Ovary (tissue), 10 donors: ENCODE measurements at regions of chr1 and their contacts with region 1.

Region 1: GRCh38 chr1:116485071-116485735 is 85.6 kb downstream of the CD58 start:
- DNase-seq: peak; percentile 81 to 94 (median 90)
- H3K4me3 ChIP-seq: no peak overlapping the region
- H3K27ac ChIP-seq: no peak overlapping the region
- H3K4me1 ChIP-seq: peaks cover 8% of the 10 kb centered on the region
- H3K27me3 ChIP-seq: no peaks in the 10 kb centered on the region
- CTCF ChIP-seq: peak; percentile 67 to 89 (median 87)
- EP300 ChIP-seq: no peak
- POLR2A ChIP-seq: no peak

Region 2: DNA sequence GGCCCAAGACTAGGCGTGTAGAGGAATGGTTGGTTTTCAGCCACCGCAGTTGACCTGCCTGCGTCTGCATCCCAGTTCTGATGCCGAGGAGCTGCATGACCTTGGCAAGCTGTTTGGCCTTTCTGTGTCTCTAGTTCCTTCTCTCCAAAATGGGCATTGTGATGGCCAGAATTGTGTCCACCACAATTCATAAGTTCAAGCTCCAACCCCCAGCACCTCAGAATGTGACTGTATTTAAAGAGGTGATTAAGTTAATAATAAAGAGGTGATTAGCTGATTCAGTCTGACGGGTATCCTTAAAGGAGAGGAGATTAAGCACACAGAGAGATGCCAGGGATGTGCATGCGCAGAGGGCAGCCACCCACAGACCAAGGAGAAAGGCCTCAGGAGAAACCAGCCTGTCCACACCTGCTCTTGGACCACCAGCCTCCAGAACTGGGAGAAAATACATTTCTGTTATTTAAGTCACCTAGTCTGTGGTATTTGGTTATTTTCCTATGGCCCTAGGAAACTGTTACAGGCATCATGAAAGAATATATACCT is 345.5 kb before region 1 on chr1:
- intact Hi-C with region 1: loop called in 1 of 4 experiments (anchors 5 kb)
- DNase-seq: no peak
- H3K4me3 ChIP-seq: no peak overlapping the region
- H3K27ac ChIP-seq: no peak overlapping the region
- H3K4me1 ChIP-seq: no peaks in the 10 kb centered on the region
- H3K27me3 ChIP-seq: no peaks in the 10 kb centered on the region
- CTCF ChIP-seq: no peak
- EP300 ChIP-seq: no peak
- POLR2A ChIP-seq: no peak

Region 3: GRCh38 chr1:116151739-116152576 is 333.2 kb before region 1 on chr1:
- intact Hi-C with region 1: loop called in 2 of 4 experiments (anchors 5 kb)
- DNase-seq: peak; percentile 61 to 84 (median 69)
- H3K4me3 ChIP-seq: peak overlapping the region; percentile 31
- H3K27ac ChIP-seq: peak overlapping the region in 1 of 2 donors; percentile 45
- H3K4me1 ChIP-seq: no peaks in the 10 kb centered on the region
- H3K27me3 ChIP-seq: no peaks in the 10 kb centered on the region
- CTCF ChIP-seq: peak; percentile 68 to 87 (median 80)
- EP300 ChIP-seq: no peak
- POLR2A ChIP-seq: no peak

Region 4: GRCh38 chr1:116352349-116352813 is 132.8 kb before region 1 on chr1:
- intact Hi-C with region 1: loop called in 1 of 4 experiments (anchors 10 kb)
- DNase-seq: no peak
- H3K4me3 ChIP-seq: no peak overlapping the region
- H3K27ac ChIP-seq: no peak overlapping the region
- H3K4me1 ChIP-seq: no peaks in the 10 kb centered on the region
- H3K27me3 ChIP-seq: no peaks in the 10 kb centered on the region
- CTCF ChIP-seq: no peak
- EP300 ChIP-seq: no peak
- POLR2A ChIP-seq: no peak

Region 5: DNA sequence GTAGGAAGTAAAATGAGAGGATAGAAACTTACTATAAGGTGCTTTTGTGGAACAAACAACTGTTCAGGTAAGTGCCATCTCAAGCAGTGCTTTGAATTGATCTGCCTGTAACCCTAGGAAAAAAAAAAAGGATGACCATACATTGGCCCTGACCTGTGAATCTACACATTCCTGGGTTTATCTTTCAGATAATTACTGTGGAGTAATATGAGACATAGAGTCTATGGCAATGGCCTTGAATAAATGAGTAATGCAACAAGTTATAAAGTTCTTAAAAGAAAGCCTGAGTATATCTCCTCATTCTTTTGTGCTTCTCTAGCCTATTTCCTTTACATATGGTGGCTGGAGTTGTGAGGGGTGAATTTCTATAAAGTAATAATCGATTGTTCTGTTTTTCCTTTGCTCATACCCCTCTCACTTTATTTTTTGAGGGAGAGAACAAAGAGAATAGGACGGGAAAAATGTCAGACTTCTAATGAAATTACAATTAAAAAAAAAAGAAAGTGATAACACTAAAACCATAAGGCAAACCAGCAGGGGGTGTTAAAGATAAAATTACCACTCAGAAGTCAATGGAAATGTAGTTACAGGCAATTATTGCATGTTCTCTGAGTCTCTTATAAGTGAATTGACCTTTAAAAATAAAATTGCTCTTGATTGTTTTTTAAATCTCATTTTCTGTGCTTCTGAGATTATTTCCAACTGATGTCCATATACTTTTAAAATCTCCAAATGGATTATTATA is 124.6 kb before region 1 on chr1:
- intact Hi-C with region 1: loop called in 3 of 4 experiments (anchors 2 to 10 kb)
- DNase-seq: no peak
- H3K4me3 ChIP-seq: no peak overlapping the region
- H3K27ac ChIP-seq: no peak overlapping the region
- H3K4me1 ChIP-seq: peaks cover 1% of the 10 kb centered on the region
- H3K27me3 ChIP-seq: no peaks in the 10 kb centered on the region
- CTCF ChIP-seq: peak in 1 of 3 donors; percentile 18
- EP300 ChIP-seq: no peak
- POLR2A ChIP-seq: no peak